MCF 10A (cell line): ENCODE measurements at regions of chr2 and their contacts with region 1.

Region 1: DNA sequence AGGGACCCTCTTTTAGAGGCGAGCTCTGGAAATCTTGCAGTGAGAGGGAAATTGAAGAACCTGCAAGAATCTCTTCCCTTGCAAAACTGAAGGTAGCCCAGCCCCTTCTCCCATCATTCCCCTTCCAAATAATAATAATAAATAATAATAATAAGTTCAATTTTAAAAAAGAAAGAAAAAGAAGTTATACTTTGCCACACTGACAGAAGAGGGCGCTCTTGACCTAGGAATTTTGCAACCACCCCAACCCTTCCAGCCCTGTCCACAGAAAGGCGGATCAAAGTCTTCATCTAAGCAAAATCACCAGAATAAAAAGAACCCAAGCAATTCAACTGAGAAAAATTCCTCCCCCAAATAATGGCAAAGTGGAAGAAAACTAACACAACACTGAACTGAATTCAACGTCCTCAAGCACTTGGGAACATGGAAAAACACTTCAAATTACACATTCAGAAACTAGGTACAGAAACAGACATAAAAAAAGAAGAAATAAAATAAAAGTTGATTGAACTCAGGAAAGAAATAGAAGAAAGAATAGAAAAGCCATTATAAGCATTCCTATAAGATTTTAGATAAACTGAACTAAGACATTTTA is 98.9 kb upstream of the GLS start:
- DNase-seq: peak; percentile 59
- H3K4me3 Mint-ChIP-seq: no peak overlapping the region
- H3K27ac Mint-ChIP-seq: no peak overlapping the region
- H3K4me1 Mint-ChIP-seq: no peaks in the 10 kb centered on the region
- H3K27me3 Mint-ChIP-seq: no peaks in the 10 kb centered on the region
- CTCF ChIP-seq: peak; percentile 72

Region 2: DNA sequence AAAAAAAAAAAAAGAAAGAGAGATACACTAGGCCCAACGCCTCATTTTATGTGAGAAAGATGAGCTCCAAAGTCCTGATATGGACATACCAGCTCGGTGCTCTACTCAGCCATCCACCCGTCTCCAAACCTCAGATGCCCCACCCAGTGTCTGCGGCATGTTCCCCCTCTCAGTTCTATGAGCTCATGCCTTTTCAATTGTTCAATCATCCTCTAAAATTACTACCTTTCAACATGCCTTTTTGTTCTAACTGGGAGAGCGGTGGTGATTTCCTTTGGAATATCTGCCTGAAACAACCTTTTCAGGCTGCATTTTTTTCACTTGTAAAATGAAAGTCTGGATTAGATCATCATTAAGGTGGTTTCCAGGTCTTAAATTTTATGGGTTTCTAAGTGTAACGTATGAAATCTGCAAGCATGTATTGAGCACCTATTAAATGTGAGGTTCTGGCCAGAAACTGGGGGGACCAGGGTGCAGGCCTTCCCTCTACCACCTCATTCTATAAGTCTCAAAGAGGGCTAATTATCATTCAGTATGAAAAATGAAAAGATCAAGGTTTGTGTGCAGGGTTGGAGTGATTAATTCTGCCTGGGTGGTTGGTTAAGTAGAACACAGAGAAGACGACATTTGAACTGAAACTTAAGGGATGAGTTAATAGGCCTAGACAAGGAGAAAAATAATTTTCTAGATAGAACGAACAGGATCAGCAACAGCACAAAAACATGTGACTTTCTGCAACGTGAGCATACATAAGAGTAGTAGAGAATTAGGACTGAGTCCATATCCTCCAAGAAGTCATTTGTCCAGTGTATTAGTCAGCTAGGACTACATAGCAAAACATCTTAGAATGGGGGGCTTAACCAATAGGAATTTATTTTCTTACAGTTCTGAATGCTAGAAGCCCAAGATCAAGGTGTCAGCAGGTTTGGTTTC is 11.5 kb after region 1 on chr2:
- CTCF ChIA-PET with region 1: interaction called, 12 read pairs
- POLR2A ChIA-PET with region 1: no interaction called
- intact Hi-C with region 1: no loop called
- DNase-seq: no peak
- H3K4me3 Mint-ChIP-seq: no peak overlapping the region
- H3K27ac Mint-ChIP-seq: no peak overlapping the region
- H3K4me1 Mint-ChIP-seq: peaks cover 8% of the 10 kb centered on the region
- H3K27me3 Mint-ChIP-seq: no peaks in the 10 kb centered on the region
- CTCF ChIP-seq: no peak

Region 3: DNA sequence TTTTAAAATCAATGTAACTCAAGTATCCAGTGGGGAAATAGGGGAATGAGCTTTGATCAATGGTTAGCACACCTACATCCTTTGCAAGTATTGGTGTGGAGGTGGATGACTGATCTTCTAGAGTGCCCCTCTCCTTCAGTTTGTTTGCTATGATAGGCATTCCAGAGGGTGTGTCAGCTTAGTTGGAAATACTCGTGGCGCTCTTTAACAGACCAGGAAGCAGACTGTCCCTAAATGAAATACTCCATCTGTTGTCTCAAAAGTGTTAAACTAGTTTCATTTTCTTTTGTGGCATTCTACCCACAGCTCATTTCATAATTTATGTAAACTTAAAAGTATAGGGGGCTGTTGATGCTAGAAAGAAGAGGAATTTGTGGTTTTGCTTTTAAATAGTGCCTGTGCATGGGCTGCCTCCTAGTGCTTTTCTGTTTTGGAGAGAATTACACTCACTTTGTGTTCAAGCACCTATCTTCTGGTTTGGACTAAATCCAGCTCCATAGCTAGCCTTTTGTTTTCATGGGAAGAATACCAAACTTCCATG is 166.1 kb after region 1 on chr2:
- CTCF ChIA-PET with region 1: interaction called, 7 read pairs
- POLR2A ChIA-PET with region 1: no interaction called
- intact Hi-C with region 1: loop called (anchors 1 kb)
- DNase-seq: peak; percentile 58
- H3K4me3 Mint-ChIP-seq: no peak overlapping the region
- H3K27ac Mint-ChIP-seq: no peak overlapping the region
- H3K4me1 Mint-ChIP-seq: peaks cover 9% of the 10 kb centered on the region
- H3K27me3 Mint-ChIP-seq: no peaks in the 10 kb centered on the region
- CTCF ChIP-seq: no peak

Region 4: DNA sequence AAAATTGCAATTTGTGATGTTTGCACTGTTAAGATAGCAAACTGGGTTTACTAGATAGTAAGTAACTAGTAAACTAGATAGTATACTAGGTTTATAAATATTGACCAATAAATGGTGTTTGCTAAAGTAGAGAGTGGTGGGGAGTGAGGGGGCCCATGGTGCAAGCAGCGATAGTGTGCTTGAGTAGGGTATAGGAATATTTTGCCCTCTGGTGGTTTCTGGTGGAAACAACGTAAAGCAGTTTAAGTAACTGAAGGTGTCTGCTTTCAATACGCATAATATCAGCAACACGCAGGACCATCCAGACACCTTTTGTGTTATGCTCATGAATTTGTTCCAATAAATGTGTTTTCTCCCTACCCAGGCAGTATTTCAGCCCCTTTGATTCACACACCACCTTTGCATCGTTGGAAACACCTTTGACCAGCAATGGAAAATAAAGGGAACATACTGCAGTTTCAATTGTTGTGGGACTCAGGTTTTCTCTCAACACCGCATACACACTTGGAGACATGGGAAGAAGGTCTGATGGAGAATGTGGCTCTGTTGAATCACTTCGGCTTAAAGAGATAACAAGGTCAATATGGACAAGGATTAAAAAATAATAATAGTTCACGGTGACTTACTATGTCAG is 248.9 kb after region 1 on chr2:
- CTCF ChIA-PET with region 1: interaction called, 11 read pairs
- POLR2A ChIA-PET with region 1: no interaction called
- intact Hi-C with region 1: loop called (anchors 1 kb)
- DNase-seq: peak; percentile 59
- H3K4me3 Mint-ChIP-seq: no peak overlapping the region
- H3K27ac Mint-ChIP-seq: no peak overlapping the region
- H3K4me1 Mint-ChIP-seq: no peaks in the 10 kb centered on the region
- H3K27me3 Mint-ChIP-seq: no peaks in the 10 kb centered on the region
- CTCF ChIP-seq: peak; percentile 61

Region 5: DNA sequence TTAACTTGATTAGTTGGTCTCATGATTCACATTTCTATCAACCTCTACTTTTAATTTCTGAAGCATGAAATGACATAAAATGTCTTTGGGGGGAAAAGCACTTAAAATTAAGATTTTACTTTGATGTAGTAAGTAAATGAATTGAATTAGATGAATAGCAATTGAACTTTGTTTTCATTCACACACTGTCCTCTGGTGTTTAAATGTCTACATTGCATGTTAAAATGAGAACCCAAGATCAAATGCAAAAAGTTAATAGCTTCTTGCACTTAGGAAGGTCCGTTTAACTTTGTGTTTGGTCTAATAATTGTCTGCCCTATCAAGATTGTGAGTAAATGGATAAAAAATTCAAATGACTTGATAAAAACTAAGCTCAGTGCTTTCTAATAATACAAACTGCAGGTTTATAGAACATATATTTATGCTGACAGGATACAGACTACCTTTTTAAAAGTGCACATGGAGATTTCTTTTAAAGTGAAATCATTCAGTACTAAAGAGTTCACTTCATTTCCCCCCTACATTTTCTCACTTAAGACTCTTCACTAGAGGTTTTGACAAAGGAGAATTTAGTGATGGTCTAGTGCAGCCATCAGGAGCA is 740.0 kb after region 1 on chr2:
- CTCF ChIA-PET with region 1: interaction called, 5 read pairs
- POLR2A ChIA-PET with region 1: no interaction called
- intact Hi-C with region 1: loop called (anchors 5 kb)
- DNase-seq: peak; percentile 57
- H3K4me3 Mint-ChIP-seq: no peak overlapping the region
- H3K27ac Mint-ChIP-seq: no peak overlapping the region
- H3K4me1 Mint-ChIP-seq: no peaks in the 10 kb centered on the region
- H3K27me3 Mint-ChIP-seq: no peaks in the 10 kb centered on the region
- CTCF ChIP-seq: peak; percentile 51